Dendritic cell treated with granulocyte-macrophage colony-stimulating factor and Interleukin-4, amounts not matched to agents 40 ng/mL and 50 ng/mL, for 4 days (primary cell): ENCODE measurements at regions of chr22 and their contacts with region 1.

Region 1: GRCh38 chr22:45268958-45269844 is 15.5 kb upstream of the UPK3A start:
- H3K4me3 Mint-ChIP-seq: peak overlapping the region; percentile 78
- H3K27ac Mint-ChIP-seq: peak overlapping the region; percentile 58
- H3K4me1 Mint-ChIP-seq: peaks cover 49% of the 10 kb centered on the region
- H3K27me3 Mint-ChIP-seq: peaks cover 11% of the 10 kb centered on the region

Region 2: GRCh38 chr22:45309472-45310227 is 40.4 kb after region 1 on chr22 and contains the start of gene FAM118A:
- intact Hi-C with region 1: loop called (anchors 10 kb)
- H3K4me3 Mint-ChIP-seq: peak within 1 kb of the TSS; percentile 91
- H3K27ac Mint-ChIP-seq: peak within 1 kb of the TSS; percentile 87
- H3K4me1 Mint-ChIP-seq: peaks cover 84% of the 10 kb centered on the region
- H3K27me3 Mint-ChIP-seq: no peaks in the 10 kb centered on the region

Region 3: DNA sequence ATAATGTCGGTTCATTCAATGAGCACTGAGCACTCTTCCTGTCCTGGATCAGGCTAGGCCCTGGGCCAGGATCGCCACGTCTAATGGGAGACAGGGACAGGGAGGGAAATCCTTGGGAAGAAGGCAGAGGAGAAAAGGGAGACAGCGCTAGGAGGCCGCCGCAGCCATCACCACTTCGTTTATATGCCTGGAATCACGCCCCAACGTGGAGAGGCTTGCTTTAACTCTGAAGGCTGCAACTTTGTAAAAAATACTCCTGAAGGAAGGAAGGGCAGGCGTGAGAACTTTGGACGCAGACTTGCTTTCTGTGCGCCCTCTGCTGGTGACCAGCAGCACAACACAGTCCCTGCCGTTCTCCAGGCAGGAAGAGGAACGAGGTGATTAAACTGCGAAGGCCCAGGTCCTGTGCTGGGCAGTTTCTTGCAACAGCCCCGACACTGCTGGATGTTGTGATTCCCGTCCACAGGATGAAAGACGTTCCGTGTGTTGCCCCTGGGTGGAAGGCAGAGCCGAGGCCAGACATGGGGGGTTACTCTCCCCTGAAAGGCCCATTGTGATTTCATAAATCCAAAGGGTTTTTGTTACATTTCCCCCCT is 166.4 kb after region 1 on chr22:
- intact Hi-C with region 1: loop called (anchors 2 kb)
- H3K4me3 Mint-ChIP-seq: no peak overlapping the region
- H3K27ac Mint-ChIP-seq: peak overlapping the region; percentile 47
- H3K4me1 Mint-ChIP-seq: peaks cover 41% of the 10 kb centered on the region
- H3K27me3 Mint-ChIP-seq: peaks cover 11% of the 10 kb centered on the region

Region 4: GRCh38 chr22:45553351-45554039 is 284.3 kb after region 1 on chr22:
- intact Hi-C with region 1: loop called (anchors 5 kb)
- H3K4me3 Mint-ChIP-seq: no peak overlapping the region
- H3K27ac Mint-ChIP-seq: no peak overlapping the region
- H3K4me1 Mint-ChIP-seq: peaks cover 31% of the 10 kb centered on the region
- H3K27me3 Mint-ChIP-seq: peaks cover 59% of the 10 kb centered on the region